HepG2 (cell line): ENCODE measurements at regions of chr10 and their contacts with region 1.

Region 1: GRCh38 chr10:95561182-95562075 is at the start of gene SORBS1:
- DNase-seq: peak; percentile 93
- ATAC-seq: peak; percentile 96
- H3K4me3 ChIP-seq: peak within 1 kb of the TSS; percentile 82 to 98 (median 91)
- H3K27ac ChIP-seq: peak within 1 kb of the TSS; percentile 41
- H3K4me1 ChIP-seq: peaks cover 88% of the 10 kb centered on the region
- H3K27me3 ChIP-seq: no peaks in the 10 kb centered on the region; a peak in 1 of 5 replicates
- CTCF ChIP-seq: no peak
- EP300 ChIP-seq: no peak
- POLR2A ChIP-seq: peak; percentile 69 to 84
- RAD21 ChIP-seq: no peak; the same call in 1 of the 2 replicates
- total RNA-seq, gene SORBS1: 16.8 and 21.0 TPM in 2 replicates

Region 2: GRCh38 chr10:95430231-95430951 is 131.0 kb before region 1 on chr10:
- CTCF ChIA-PET with region 1: no interaction called
- POLR2A ChIA-PET with region 1: no interaction called
- in situ Hi-C with region 1: loop called (anchors 25 kb)
- intact Hi-C with region 1: loop called (anchors 2 kb)
- DNase-seq: peak; percentile 65
- ATAC-seq: peak; percentile 94
- H3K4me3 ChIP-seq: no peak overlapping the region
- H3K27ac ChIP-seq: no peak overlapping the region
- H3K4me1 ChIP-seq: peaks cover 17% of the 10 kb centered on the region
- H3K27me3 ChIP-seq: no peaks in the 10 kb centered on the region
- CTCF ChIP-seq: peak; percentile 93
- EP300 ChIP-seq: no peak
- POLR2A ChIP-seq: no peak
- RAD21 ChIP-seq: peak; percentile 95

Region 3: GRCh38 chr10:95451568-95452524 is 109.6 kb before region 1 on chr10:
- CTCF ChIA-PET with region 1: no interaction called
- POLR2A ChIA-PET with region 1: no interaction called
- in situ Hi-C with region 1: loop called (anchors 25 kb)
- intact Hi-C with region 1: loop called (anchors 5 kb)
- DNase-seq: peak; percentile 91
- ATAC-seq: peak; percentile 96
- H3K4me3 ChIP-seq: peak overlapping the region; percentile 16 to 46 (median 27); a peak in 5 of 6 replicates
- H3K27ac ChIP-seq: peak overlapping the region; percentile 90
- H3K4me1 ChIP-seq: peaks cover 97% of the 10 kb centered on the region
- H3K27me3 ChIP-seq: no peaks in the 10 kb centered on the region
- CTCF ChIP-seq: no peak
- EP300 ChIP-seq: no peak
- POLR2A ChIP-seq: no peak
- RAD21 ChIP-seq: no peak

Region 4: DNA sequence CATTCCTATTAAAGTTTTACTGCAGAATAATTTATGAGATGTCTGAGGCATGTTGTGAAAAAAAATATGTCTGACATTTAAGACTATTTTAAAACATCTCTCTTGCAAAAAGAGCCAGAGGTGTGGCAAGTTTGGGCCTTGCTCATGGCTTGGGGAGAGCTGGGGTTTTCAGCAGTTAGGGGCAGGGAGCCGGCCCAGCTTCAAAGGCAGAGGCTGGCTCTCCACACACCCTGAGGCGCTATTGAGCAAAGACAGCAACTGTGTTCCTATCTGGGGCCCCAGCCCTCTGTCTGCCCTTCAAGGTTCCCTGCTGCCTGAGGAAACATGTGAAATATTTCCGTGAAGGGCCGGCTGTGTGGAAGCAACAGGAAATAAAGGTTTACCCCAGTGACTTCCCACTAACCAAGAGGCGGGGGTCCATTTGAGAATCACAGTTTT is 94.2 kb before region 1 on chr10:
- CTCF ChIA-PET with region 1: no interaction called
- POLR2A ChIA-PET with region 1: no interaction called
- in situ Hi-C with region 1: no loop called
- intact Hi-C with region 1: loop called (anchors 5 kb)
- DNase-seq: peak; percentile 83
- ATAC-seq: peak; percentile 99
- H3K4me3 ChIP-seq: no peak overlapping the region
- H3K27ac ChIP-seq: peak overlapping the region; percentile 65
- H3K4me1 ChIP-seq: peaks cover 92% of the 10 kb centered on the region
- H3K27me3 ChIP-seq: no peaks in the 10 kb centered on the region
- CTCF ChIP-seq: peak; percentile 82
- EP300 ChIP-seq: peak in 1 of 2 experiments; percentile 88; a peak in 2 of 4 replicates
- POLR2A ChIP-seq: no peak
- RAD21 ChIP-seq: peak; percentile 84

Region 5: GRCh38 chr10:95501203-95502094 is 60.0 kb before region 1 on chr10:
- CTCF ChIA-PET with region 1: no interaction called
- POLR2A ChIA-PET with region 1: interaction called, 3 read pairs
- in situ Hi-C with region 1: no loop called
- intact Hi-C with region 1: loop called (anchors 2 kb)
- DNase-seq: peak; percentile 38
- ATAC-seq: peak; percentile 81
- H3K4me3 ChIP-seq: peak overlapping the region in 2 of 3 experiments; percentile 17 to 24; a peak in 1 of 6 replicates
- H3K27ac ChIP-seq: peak overlapping the region; percentile 70
- H3K4me1 ChIP-seq: peaks cover 73% of the 10 kb centered on the region
- H3K27me3 ChIP-seq: no peaks in the 10 kb centered on the region
- CTCF ChIP-seq: no peak
- EP300 ChIP-seq: no peak; a peak in 1 of 4 replicates
- POLR2A ChIP-seq: no peak
- RAD21 ChIP-seq: no peak; the same call in 1 of the 2 replicates

Region 6: DNA sequence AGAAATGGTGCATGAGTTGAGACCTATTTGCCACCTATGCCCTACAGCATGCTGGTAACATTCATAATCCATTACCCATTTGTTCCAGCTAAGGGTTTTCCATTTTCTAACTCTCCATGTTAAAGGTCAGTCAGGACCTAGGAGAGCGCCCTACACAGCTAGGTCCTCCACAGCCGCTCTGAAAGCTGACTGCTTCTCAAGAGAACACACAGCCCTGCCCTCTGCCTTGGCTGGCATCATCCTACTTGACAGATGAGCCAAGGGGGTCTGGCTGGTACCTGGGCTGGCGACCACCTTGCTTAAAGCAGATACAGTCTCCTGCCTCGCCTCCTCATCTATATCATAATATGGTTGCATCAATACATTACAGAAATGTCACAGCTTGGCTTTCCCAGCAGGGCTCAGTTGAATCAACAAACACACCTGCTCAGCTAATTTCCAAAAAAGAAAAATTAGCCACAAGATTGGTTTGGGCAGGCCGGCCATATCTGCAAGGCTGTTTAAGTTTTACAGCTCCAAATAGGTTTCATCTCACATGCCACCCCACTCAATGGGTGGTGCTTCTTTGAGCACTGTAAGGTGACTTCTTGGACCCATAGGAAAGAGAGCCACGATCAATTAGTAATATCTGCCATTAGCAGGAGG is 935.0 kb after region 1 on chr10:
- CTCF ChIA-PET with region 1: no interaction called
- POLR2A ChIA-PET with region 1: no interaction called
- in situ Hi-C with region 1: no loop called
- intact Hi-C with region 1: no loop called
- DNase-seq: no peak
- ATAC-seq: peak; percentile 76
- H3K4me3 ChIP-seq: no peak overlapping the region
- H3K27ac ChIP-seq: no peak overlapping the region
- H3K4me1 ChIP-seq: peaks cover 16% of the 10 kb centered on the region
- H3K27me3 ChIP-seq: peaks cover 2 to 30% of the 10 kb centered on the region in 2 experiments; a peak in 4 of 5 replicates
- CTCF ChIP-seq: no peak
- EP300 ChIP-seq: no peak
- POLR2A ChIP-seq: no peak
- RAD21 ChIP-seq: no peak